ENCODE measurements at regions of chr9 and their contacts with region 1.

Region 1: GRCh38 chr9:135410831-135411473 is 68.6 kb upstream of the PPP1R26 start:
- DNase-seq: peak; percentile 11
- CTCF ChIP-seq: no peak

Region 2: GRCh38 chr9:135085830-135086546 is 325.0 kb before region 1 on chr9:
- in situ Hi-C with region 1: loop called (anchors 25 kb)
- DNase-seq: peak; percentile 80
- CTCF ChIP-seq: peak; percentile 65

Region 3: DNA sequence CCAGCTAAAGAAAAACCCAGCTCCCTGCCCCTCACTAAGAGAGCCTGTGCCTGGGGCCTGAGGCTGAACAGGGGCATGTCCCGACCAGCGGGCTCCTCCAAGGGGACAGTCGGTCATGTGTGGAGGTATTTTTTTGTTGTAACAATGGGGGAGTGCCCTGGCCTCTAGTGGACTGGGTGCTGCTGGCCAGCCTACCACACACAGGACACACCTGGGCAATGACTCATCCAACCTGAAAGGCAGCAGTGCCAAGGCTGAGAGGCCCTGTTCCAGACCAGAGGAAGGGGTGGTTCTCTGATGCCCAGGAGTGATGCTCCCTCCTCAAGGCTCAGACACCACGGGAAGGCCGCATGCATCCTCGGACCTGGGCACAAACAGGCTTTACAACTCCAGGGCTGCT is 142.0 kb before region 1 on chr9:
- in situ Hi-C with region 1: no loop called
- DNase-seq: no peak
- CTCF ChIP-seq: no peak